Activated B cell treated with CpG ODN at 0.5 μM for 24 hours (primary cell): ENCODE measurements at regions of chr4 and their contacts with region 1.

Region 1: DNA sequence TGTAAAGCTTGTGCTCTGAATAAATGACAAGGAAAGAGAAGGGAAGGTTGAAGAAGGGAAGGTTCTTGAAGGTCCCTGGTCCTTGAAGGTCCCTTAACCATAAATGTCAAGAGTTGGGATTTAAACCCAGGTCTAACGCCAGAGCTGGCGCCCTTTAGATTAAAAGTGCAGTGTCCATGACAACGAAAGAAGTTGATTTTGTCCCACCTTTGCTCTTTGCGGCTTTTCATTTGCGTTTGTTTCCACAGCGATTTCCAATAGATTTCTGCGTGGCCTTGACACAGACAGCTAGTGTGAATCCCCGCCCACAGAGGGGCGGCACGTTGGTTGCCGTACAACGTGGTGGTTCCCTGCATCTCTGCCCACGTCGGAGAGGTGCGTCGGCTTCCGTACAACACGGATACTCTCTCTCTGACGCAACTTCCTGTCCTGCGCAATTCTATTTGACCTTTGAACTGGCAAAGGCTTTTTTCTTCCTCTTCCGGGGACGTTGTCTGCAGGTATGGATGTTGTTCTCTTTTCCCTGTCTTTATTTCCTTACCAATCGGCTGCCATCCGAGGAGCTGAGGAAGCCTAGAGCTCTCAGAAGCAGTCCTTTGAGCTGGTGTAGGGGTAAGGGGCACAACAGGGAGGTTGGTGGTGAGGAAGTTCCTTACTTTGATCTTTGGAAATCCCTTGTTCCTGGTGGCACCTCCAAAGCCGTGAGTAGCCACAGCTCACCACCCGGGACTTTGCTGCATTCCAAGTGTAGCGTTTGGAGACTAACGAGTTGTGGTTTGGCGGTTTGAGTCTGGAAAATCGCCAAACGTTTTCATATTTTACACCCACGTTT is at the start of gene RPL34:
- DNase-seq: peak; percentile 83
- ATAC-seq: peak; percentile 100
- H3K4me3 Mint-ChIP-seq: peak within 1 kb of the TSS; percentile 95
- H3K27ac Mint-ChIP-seq: peak within 1 kb of the TSS; percentile 95
- H3K4me1 Mint-ChIP-seq: peaks cover 50% of the 10 kb centered on the region
- H3K27me3 Mint-ChIP-seq: no peaks in the 10 kb centered on the region
- CTCF ChIP-seq: no peak
- total RNA-seq, gene RPL34: 2,310 and 2,662 TPM in 2 replicates

Region 2: GRCh38 chr4:107719922-107720722 is 900.2 kb before region 1 on chr4 and contains the start of gene PAPSS1:
- CTCF ChIA-PET with region 1: no interaction called
- POLR2A ChIA-PET with region 1: interaction called, 19 read pairs
- intact Hi-C with region 1: loop called (anchors 1 kb)
- DNase-seq: peak; percentile 92
- ATAC-seq: peak; percentile 87
- H3K4me3 Mint-ChIP-seq: peak within 1 kb of the TSS; percentile 97
- H3K27ac Mint-ChIP-seq: peak within 1 kb of the TSS; percentile 96
- H3K4me1 Mint-ChIP-seq: peaks cover 34% of the 10 kb centered on the region
- H3K27me3 Mint-ChIP-seq: no peaks in the 10 kb centered on the region
- CTCF ChIP-seq: no peak
- total RNA-seq, gene PAPSS1: 31.8 and 34.2 TPM in 2 replicates

Region 3: DNA sequence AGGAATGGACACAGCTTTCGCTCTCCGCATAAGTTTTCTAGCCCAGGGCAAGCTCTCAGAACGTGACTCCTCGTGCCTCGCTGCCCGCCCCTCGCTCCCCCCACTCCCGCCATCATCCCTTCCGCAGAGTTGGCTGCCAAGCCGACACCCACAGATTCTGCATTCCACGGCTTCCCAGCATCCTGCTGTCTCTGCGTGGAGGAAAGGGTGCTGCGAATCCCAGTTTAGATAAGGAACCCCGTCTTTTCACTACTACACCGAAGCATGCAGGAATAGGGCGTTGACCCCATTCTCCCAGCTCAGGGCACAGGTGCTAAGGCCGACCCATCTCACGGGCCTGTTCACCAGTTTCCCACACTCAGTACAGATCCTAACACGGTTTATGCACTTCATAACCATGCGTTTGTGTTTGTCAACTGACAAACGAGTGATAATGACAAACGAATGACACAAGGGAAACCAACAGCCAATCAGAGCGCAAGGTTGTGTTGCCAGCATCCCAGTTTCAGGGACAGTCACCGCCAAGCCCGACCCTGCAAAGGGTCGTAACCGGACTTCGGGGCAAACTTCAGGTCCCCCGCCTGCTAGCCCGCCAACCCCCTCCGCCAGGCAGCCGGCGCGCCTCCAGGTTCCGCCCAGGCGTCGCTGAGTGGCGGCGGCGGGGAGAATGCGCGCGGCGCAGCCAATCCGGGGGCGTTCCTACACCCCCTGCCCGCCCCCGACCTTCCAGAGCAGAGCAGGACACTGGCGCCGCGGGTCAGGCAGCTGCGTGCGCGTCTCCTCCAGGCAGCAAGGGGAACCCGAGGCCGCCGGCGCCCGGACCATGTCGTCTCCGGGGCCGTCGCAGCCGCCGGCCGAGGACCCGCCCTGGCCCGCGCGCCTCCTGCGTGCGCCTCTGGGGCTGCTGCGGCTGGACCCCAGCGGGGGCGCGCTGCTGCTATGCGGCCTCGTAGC is 689.2 kb before region 1 on chr4 and contains the start of gene CYP2U1:
- CTCF ChIA-PET with region 1: no interaction called
- POLR2A ChIA-PET with region 1: interaction called, 3 read pairs
- intact Hi-C with region 1: loop called (anchors 1 kb)
- DNase-seq: peak; percentile 88
- ATAC-seq: peak; percentile 95
- H3K4me3 Mint-ChIP-seq: peak within 1 kb of the TSS; percentile 96
- H3K27ac Mint-ChIP-seq: peak within 1 kb of the TSS; percentile 91
- H3K4me1 Mint-ChIP-seq: peaks cover 41% of the 10 kb centered on the region
- H3K27me3 Mint-ChIP-seq: no peaks in the 10 kb centered on the region
- CTCF ChIP-seq: no peak
- total RNA-seq, gene CYP2U1: 9.2 and 11.6 TPM in 2 replicates

Region 4: GRCh38 chr4:108592674-108592986 is 27.7 kb before region 1 on chr4:
- CTCF ChIA-PET with region 1: no interaction called
- POLR2A ChIA-PET with region 1: interaction called, 11 read pairs
- intact Hi-C with region 1: no loop called
- DNase-seq: no peak
- ATAC-seq: no peak
- H3K4me3 Mint-ChIP-seq: no peak overlapping the region
- H3K27ac Mint-ChIP-seq: no peak overlapping the region
- H3K4me1 Mint-ChIP-seq: no peaks in the 10 kb centered on the region
- H3K27me3 Mint-ChIP-seq: no peaks in the 10 kb centered on the region
- CTCF ChIP-seq: no peak

Region 5: DNA sequence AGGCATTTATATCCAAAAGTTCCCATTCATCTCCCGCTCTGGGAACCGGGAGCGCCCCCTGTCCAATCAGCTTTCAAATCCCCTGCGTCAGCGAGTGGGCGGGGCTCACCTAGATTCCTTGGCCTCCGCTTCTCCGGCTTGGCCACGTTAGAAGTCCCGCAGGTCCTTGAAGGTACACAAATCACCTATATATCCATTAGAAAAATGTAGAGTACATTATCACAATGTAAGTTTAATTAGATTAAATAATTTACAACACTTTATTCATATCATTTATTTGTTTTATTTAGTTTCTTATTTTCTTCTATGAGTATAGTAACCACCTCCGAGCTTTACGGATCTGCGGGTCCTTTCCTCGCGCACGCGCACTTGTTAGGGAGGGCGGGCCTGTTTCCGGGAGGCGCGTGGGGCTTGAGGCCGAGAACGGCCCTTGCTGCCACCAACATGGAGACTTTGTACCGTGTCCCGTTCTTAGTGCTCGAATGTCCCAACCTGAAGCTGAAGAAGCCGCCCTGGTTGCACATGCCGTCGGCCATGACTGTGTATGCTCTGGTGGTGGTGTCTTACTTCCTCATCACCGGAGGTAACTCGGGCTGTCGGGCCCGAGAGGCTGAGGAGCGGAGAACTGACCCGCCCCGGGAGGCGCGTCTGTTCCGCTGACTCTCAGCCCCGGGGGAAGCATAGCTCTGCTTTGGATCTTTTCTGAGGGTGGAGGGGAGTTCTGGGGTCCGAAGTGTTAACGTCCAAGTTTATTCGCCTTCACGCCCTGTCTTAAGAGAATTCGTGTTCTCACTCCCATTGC is 30.1 kb after region 1 on chr4 and contains the start of gene OSTC:
- CTCF ChIA-PET with region 1: no interaction called
- POLR2A ChIA-PET with region 1: interaction called, 56 read pairs
- intact Hi-C with region 1: loop called (anchors 1 kb)
- DNase-seq: peak; percentile 87
- ATAC-seq: peak; percentile 93
- H3K4me3 Mint-ChIP-seq: peak within 1 kb of the TSS; percentile 97
- H3K27ac Mint-ChIP-seq: peak within 1 kb of the TSS; percentile 97
- H3K4me1 Mint-ChIP-seq: peaks cover 38% of the 10 kb centered on the region
- H3K27me3 Mint-ChIP-seq: no peaks in the 10 kb centered on the region
- CTCF ChIP-seq: no peak
- total RNA-seq, gene OSTC: 56.7 and 60.1 TPM in 2 replicates

Region 6: DNA sequence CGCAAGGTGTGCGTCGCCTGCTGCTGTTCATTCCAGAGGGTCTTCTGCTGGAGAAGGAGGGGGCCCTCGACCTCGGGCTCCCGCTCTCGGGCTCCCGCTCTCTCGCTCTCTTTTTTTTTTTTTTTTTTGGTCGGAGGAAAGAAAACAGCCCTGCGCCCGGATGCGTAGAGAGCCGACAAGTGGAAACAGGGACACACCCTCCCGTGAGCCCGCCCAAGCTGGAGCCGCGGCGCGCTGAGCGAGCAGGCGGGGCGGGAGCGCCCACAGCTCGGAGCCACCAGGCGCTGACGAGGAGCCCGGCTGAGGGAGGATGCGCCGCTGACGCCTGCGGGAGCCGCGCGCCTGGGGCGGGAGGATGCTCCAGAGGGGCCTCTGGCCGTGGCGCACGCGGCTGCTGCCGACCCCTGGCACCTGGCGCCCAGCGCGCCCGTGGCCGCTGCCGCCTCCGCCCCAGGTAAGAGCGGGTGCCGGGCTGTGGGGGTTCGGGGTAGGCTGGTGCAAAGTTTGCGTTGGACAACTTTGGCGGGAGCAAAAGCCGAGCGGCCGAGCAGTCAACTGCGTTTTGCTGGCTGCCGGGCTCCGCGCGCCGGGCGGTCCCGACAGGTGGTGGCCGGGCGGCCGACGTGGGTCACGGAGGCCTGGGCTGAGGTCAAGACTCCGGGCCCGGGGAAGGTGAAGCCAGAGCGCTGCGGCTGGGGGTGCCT is 939.8 kb after region 1 on chr4 and contains the start of gene MCUB:
- CTCF ChIA-PET with region 1: no interaction called
- POLR2A ChIA-PET with region 1: no interaction called
- intact Hi-C with region 1: loop called (anchors 2 kb)
- DNase-seq: peak; percentile 75
- ATAC-seq: peak; percentile 84
- H3K4me3 Mint-ChIP-seq: peak within 1 kb of the TSS; percentile 93
- H3K27ac Mint-ChIP-seq: peak within 1 kb of the TSS; percentile 97
- H3K4me1 Mint-ChIP-seq: peaks cover 49% of the 10 kb centered on the region
- H3K27me3 Mint-ChIP-seq: no peaks in the 10 kb centered on the region
- CTCF ChIP-seq: no peak
- total RNA-seq, gene MCUB: 28.9 and 34.4 TPM in 2 replicates

Region 7: GRCh38 chr4:109815151-109816081 is 1195.1 kb after region 1 on chr4 and contains the start of gene GAR1:
- CTCF ChIA-PET with region 1: no interaction called
- POLR2A ChIA-PET with region 1: interaction called, 3 read pairs
- intact Hi-C with region 1: loop called (anchors 10 kb)
- DNase-seq: peak; percentile 70
- ATAC-seq: peak; percentile 97
- H3K4me3 Mint-ChIP-seq: peak within 1 kb of the TSS; percentile 94
- H3K27ac Mint-ChIP-seq: peak within 1 kb of the TSS; percentile 93
- H3K4me1 Mint-ChIP-seq: peaks cover 28% of the 10 kb centered on the region
- H3K27me3 Mint-ChIP-seq: no peaks in the 10 kb centered on the region
- CTCF ChIP-seq: no peak
- total RNA-seq, gene GAR1: 21.0 and 23.1 TPM in 2 replicates